Activated CD4-positive, alpha-beta memory T cell treated with anti-CD3 and anti-CD28 coated beads for 36 hours (primary cell): ENCODE measurements at regions of chr19 and their contacts with region 1.

Region 1: DNA sequence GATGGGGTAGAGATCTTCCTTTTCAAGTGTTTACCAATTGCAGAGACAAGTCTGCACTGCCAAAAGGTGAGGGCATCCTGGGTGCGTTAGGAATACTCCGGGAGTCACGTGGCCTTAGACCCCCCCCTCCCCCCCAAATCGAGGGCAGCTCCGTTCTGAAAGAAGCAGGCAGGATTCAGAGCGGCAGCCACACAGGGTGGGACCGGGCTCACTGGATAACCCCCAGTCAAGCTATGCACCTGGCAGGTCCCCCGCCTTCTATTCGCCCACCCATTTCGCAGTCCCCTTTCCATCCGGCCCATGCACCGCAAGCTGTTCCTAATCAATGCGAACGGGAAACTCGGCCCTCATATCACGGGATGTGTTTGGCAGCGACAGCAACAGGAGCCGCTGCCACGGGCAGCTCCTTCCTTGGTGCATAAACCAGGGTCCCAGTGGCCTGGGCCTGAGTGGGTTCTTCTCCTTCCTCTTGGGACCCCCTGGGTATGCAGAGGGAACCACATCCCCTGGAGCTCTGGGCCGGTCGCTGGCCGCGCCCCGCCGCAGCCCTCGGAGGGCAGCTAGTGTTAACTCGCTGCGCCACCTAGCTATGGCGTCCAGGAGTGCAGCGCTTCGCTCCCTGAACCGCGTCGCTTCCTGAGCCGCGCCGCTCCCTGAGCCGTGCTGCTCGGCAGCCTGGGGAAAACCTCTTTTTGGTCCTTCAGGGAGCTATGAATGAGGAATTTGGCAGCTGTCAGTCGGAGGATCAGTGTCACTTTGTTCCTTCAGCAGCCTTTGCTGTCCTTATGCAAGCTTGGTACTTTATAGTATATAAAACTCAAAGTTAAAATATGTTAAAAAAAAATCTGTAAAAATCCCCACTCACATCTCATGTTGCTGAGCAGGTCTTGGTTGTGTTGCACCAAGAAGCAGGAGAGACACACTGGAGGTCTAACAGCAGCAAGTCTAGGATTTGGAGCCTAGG is 41.4 kb downstream of the LYL1 start:
- DNase-seq: peak; percentile 85
- H3K4me3 Mint-ChIP-seq: peak overlapping the region; percentile 70
- H3K27ac Mint-ChIP-seq: no peak overlapping the region
- H3K4me1 Mint-ChIP-seq: peaks cover 8% of the 10 kb centered on the region
- H3K27me3 Mint-ChIP-seq: peaks cover 10% of the 10 kb centered on the region

Region 2: DNA sequence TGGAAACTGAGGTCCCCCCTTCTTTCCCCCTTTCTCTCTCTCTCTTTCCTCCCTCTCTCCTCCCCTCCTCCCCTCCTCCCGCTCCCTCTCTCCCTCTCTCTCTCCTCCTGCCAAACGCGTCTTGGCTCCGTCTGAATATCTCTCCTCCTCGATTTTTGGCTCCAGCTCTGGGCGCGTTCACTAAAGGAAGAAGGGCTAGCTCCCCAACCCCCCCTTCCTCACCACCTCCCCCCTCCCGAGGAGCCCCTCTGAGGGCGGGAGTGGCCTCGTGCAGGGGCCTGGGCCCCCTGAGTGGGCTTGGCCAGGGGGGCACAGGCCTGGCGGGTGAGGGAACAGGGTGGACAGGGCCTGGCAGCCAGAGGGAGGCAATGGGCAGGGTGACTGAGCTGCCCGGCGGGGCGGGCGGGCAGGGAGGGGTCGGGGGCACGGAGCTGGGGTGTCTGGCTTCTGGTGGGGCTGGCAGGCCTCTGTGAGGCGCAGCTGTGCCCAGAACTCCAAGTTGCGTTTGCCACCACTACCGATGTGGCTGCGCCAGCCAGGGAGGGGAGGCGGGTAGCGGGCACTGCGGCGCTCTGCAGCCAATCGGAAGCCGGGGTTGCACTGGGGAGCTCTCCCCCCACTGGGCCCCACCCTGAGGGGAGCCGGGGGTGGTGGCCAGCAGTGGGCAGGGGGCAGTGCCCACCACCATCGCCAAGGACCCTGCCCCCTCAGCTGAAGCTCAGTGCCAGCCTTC is 58.9 kb before region 1 on chr19:
- CTCF ChIA-PET with region 1: interaction called, 26 read pairs
- POLR2A ChIA-PET with region 1: no interaction called
- intact Hi-C with region 1: no loop called
- DNase-seq: no peak
- H3K4me3 Mint-ChIP-seq: no peak overlapping the region
- H3K27ac Mint-ChIP-seq: no peak overlapping the region
- H3K4me1 Mint-ChIP-seq: no peaks in the 10 kb centered on the region
- H3K27me3 Mint-ChIP-seq: peaks cover 5% of the 10 kb centered on the region

Region 3: DNA sequence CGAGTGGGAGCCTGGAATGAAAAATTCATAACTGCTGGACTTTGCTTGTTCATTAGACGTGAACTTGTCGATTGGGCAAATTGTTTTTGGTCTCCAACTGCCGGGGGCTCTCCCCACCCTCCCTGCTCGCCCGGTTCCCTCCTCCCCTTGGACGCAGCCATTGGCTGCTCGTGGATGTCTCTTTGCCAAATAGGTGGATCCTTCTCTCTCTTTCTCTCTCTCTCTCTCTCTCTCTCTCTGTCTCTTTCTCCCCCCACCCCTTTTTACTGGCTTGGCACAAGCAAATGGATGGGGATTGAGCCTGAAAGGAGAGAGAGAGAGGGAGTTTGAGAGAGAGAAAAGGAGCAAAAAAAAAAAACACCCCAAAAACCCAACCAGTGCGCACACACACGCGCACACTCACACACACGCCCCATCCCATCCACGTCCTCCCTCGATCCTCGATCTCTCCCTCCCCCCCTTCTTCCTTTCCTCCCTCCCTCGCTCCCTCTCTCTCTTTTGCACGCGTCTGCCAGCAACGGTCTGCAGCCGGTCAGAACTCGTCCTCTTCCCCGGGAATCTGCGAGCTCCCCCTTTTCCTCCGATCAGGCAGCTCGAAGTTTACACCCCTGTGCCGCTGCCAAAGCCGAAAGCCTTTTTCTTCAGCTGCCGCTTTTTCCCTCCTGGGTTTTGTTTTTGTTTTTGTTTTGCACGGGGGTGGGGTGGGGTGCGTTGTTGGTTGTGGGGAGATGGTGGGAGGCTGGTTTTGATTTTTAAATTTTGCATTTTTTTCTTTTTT is 38.2 kb before region 1 on chr19:
- CTCF ChIA-PET with region 1: interaction called, 27 read pairs
- POLR2A ChIA-PET with region 1: no interaction called
- intact Hi-C with region 1: no loop called
- DNase-seq: no peak
- H3K4me3 Mint-ChIP-seq: peak overlapping the region; percentile 58
- H3K27ac Mint-ChIP-seq: no peak overlapping the region
- H3K4me1 Mint-ChIP-seq: peaks cover 18% of the 10 kb centered on the region
- H3K27me3 Mint-ChIP-seq: peaks cover 20% of the 10 kb centered on the region

Region 4: GRCh38 chr19:13044231-13044836 is 16.9 kb before region 1 on chr19:
- CTCF ChIA-PET with region 1: interaction called, 42 read pairs
- POLR2A ChIA-PET with region 1: no interaction called
- intact Hi-C with region 1: no loop called
- DNase-seq: no peak
- H3K4me3 Mint-ChIP-seq: no peak overlapping the region
- H3K27ac Mint-ChIP-seq: no peak overlapping the region
- H3K4me1 Mint-ChIP-seq: peaks cover 5% of the 10 kb centered on the region
- H3K27me3 Mint-ChIP-seq: no peaks in the 10 kb centered on the region

Region 5: DNA sequence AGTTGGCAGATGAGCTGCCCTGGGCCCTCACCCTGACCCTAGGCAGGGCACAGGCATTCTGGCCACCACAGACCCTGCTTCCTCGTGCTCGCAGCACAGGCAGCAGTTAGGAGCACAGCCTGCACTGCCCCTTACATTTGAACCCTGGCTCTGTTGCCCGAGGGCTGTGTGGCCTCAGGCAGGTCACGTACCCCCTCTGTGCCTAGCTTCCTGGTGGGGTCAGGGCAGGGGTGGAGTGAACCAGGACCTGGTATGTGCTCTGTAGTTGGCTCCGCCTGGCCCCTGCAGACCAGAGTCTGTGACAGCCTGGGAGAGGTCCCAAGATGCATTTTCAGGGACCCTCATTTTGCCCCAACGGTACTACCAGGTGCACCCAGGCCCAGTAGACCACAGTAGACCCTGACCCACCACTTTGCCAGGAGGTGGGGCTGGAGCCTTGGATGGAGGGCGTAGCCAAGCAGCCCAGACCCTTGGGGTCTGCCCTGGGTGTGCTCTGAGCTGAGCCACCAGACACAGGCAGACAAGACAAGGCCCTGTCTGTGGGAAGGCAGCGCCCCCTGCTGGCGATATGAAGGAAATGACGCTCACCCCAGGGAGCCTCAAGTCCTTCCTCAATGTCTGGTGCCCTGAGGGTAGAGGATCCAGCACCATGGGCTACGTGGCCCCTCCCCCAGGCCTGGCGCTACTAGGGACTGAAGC is 32.3 kb after region 1 on chr19:
- CTCF ChIA-PET with region 1: interaction called, 64 read pairs
- POLR2A ChIA-PET with region 1: no interaction called
- intact Hi-C with region 1: loop called (anchors 2 kb)
- DNase-seq: peak; percentile 89
- H3K4me3 Mint-ChIP-seq: no peak overlapping the region
- H3K27ac Mint-ChIP-seq: no peak overlapping the region
- H3K4me1 Mint-ChIP-seq: peaks cover 24% of the 10 kb centered on the region
- H3K27me3 Mint-ChIP-seq: peaks cover 20% of the 10 kb centered on the region